K562 (cell line): ENCODE measurements at regions of chr2 and their contacts with region 1.

Region 1: DNA sequence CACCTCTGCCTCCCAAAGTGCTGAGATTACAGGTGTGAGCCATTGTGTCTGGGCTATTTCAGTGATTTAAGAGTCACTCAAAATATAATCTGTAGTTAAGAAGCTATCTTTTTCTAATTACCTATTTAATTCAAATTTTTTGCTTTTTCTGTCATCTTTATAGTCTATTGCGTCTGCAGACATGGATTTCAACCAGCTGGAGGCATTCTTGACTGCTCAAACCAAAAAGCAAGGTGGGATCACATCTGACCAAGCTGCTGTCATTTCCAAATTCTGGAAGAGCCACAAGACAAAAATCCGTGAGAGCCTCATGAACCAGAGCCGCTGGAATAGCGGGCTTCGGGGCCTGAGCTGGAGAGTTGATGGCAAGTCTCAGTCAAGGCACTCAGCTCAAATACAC is 95.1 kb downstream of the COMMD1 start:
- DNase-seq: no peak
- ATAC-seq: no peak
- H3K4me3 ChIP-seq: no peak overlapping the region
- H3K27ac ChIP-seq: no peak overlapping the region
- H3K4me1 ChIP-seq: peaks cover 0 to 3% of the 10 kb centered on the region in 2 experiments; a peak in 3 of 5 replicates
- H3K27me3 ChIP-seq: no peaks in the 10 kb centered on the region
- CTCF ChIP-seq: no peak
- EP300 ChIP-seq: no peak
- POLR2A ChIP-seq: no peak
- RAD21 ChIP-seq: no peak

Region 2: DNA sequence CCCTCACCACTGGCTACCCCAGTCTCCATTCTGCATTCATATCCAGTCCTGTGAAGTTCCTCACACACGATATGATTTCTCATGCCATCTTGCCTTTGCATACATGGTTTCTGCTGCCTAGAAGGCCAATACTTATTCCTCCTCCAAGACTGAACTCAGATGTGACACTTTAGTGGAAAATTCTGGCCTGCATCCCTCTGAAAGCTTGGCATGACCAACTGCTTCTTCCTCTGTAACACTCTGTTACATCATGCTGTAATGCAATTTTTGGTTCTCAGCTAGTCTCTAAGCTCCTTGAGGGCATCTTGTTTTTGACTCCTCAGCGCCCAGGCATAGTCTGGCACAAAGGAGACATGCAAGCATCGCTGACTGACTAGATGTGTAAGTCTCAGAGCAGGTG is 159.3 kb before region 1 on chr2:
- CTCF ChIA-PET with region 1: no interaction called
- POLR2A ChIA-PET with region 1: no interaction called
- in situ Hi-C with region 1: no loop called
- intact Hi-C with region 1: no loop called
- DNase-seq: no peak
- ATAC-seq: no peak
- H3K4me3 ChIP-seq: no peak overlapping the region
- H3K27ac ChIP-seq: no peak overlapping the region
- H3K4me1 ChIP-seq: no peaks in the 10 kb centered on the region
- H3K27me3 ChIP-seq: no peaks in the 10 kb centered on the region; a peak in 2 of 5 replicates
- CTCF ChIP-seq: no peak
- EP300 ChIP-seq: no peak
- POLR2A ChIP-seq: no peak
- RAD21 ChIP-seq: no peak

Region 3: DNA sequence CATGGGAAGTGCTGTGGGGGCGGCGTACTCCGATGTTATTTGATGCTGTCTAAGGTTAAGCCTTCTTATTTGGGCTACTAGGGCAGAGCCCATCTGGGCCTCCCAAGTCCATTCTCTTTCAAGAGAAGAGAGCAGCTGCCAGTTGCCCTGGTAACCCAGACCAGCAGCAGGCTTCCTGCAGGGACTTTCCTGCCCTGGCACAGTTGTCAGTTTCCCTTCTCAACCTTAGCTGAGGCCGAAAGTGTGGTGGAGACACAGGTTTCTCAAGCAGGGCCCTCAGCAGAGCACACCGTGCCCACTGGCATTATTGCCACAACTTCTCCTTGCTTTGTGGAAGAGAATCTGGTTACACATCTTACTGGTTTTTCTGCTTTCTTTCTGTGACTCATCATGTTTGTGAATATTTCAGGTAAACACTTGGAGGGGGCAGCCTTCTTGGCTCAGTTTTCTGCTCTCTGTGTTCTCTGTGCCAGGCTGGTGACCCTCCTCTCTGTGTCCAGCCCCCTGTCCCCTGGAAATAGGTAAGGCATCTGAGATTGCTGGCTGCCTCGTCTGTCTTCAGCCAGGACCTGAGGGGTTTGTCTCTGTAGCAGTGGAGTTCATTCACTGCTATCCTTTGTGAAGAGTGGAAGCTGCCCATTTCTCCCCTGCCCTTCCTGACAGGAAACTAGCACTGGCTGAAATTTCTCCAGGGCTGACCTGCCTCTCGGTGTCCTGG is 306.4 kb after region 1 on chr2:
- CTCF ChIA-PET with region 1: no interaction called
- POLR2A ChIA-PET with region 1: interaction called, 3 read pairs
- in situ Hi-C with region 1: loop called (anchors 10 kb)
- intact Hi-C with region 1: no loop called
- DNase-seq: no peak
- ATAC-seq: no peak
- H3K4me3 ChIP-seq: no peak overlapping the region
- H3K27ac ChIP-seq: peak overlapping the region; percentile 34; the same call in 1 of the 3 replicates
- H3K4me1 ChIP-seq: peaks cover 49 to 71% of the 10 kb centered on the region in 2 experiments
- H3K27me3 ChIP-seq: no peaks in the 10 kb centered on the region; a peak in 1 of 5 replicates
- CTCF ChIP-seq: no peak
- EP300 ChIP-seq: no peak
- POLR2A ChIP-seq: no peak
- RAD21 ChIP-seq: no peak